HepG2 (cell line): ENCODE measurements at regions of chr16 and their contacts with region 1.

Region 1: GRCh38 chr16:12613131-12613991 is 190.3 kb downstream of the CPPED1 start:
- DNase-seq: peak; percentile 100
- ATAC-seq: peak; percentile 86
- H3K4me3 ChIP-seq: peak overlapping the region in 1 of 3 experiments; percentile 35; a peak in 1 of 6 replicates
- H3K27ac ChIP-seq: peak overlapping the region; percentile 97
- H3K4me1 ChIP-seq: peaks cover 88% of the 10 kb centered on the region
- H3K27me3 ChIP-seq: no peaks in the 10 kb centered on the region
- CTCF ChIP-seq: 0 out of 2 replicates have a peak, but pooled peaks have one; percentile 9
- EP300 ChIP-seq: peak; percentile 90 to 95
- POLR2A ChIP-seq: peak in 1 of 2 experiments; percentile 49; a peak in 2 of 4 replicates
- RAD21 ChIP-seq: peak; percentile 35

Region 2: GRCh38 chr16:12546918-12547607 is 66.3 kb before region 1 on chr16:
- CTCF ChIA-PET with region 1: no interaction called
- POLR2A ChIA-PET with region 1: no interaction called
- in situ Hi-C with region 1: loop called (anchors 10 kb)
- intact Hi-C with region 1: no loop called
- DNase-seq: no peak
- ATAC-seq: no peak
- H3K4me3 ChIP-seq: no peak overlapping the region
- H3K27ac ChIP-seq: no peak overlapping the region
- H3K4me1 ChIP-seq: peaks cover 50% of the 10 kb centered on the region
- H3K27me3 ChIP-seq: no peaks in the 10 kb centered on the region
- CTCF ChIP-seq: no peak
- EP300 ChIP-seq: no peak
- POLR2A ChIP-seq: no peak
- RAD21 ChIP-seq: no peak

Region 3: GRCh38 chr16:12584488-12585223 is 28.7 kb before region 1 on chr16:
- CTCF ChIA-PET with region 1: no interaction called
- POLR2A ChIA-PET with region 1: interaction called, 34 read pairs
- in situ Hi-C with region 1: no loop called
- intact Hi-C with region 1: no loop called
- DNase-seq: peak; percentile 91
- ATAC-seq: peak; percentile 52
- H3K4me3 ChIP-seq: no peak overlapping the region
- H3K27ac ChIP-seq: peak overlapping the region; percentile 27
- H3K4me1 ChIP-seq: peaks cover 48% of the 10 kb centered on the region
- H3K27me3 ChIP-seq: no peaks in the 10 kb centered on the region
- CTCF ChIP-seq: no peak
- EP300 ChIP-seq: peak; percentile 19 to 64; a peak in 2 of 4 replicates
- POLR2A ChIP-seq: no peak
- RAD21 ChIP-seq: no peak

Region 4: DNA sequence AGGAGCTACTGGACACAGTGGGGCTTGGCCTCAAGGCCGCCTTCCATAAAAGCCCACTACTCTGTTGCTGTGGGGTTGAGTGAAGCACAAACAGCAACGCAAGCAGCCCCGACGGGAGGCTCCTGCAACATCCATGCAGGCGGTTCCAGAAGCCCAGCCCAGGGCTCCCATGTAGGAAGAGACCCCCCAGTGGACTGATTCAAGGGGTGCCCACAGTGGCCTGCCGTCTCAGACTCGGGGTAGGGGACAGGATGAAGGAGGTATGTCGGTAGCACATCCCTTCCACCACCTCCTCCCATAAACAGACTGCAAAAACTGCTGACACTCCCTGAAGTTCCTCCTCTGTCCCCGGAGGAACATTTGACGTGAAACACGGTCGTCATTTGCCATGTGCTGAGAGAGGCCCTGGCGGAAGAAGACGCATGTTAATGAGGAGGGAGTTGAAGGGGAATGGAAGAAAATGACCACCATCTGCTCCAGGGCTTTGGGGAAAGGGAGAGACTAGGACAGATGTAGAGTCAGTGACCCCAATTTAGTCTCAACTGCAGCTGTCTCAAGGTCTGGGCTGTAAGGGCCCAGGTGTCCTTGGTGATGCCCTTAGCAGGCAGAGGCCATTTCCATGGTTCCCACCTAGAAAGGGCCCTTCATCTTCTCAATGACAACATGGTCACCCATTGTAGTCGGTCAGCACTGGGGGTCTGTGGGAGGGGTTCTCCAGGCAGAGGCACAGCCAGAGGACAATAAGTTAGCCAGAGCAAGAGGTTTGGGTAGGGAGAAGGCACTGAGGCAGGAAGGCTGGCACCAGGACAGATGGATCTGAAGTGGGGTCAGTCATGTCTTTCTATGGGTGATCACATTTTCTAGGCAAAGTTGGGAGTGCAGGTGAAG is 10.3 kb before region 1 on chr16:
- CTCF ChIA-PET with region 1: no interaction called
- POLR2A ChIA-PET with region 1: interaction called, 17 read pairs
- in situ Hi-C with region 1: no loop called
- intact Hi-C with region 1: no loop called
- DNase-seq: no peak
- ATAC-seq: no peak
- H3K4me3 ChIP-seq: no peak overlapping the region
- H3K27ac ChIP-seq: no peak overlapping the region
- H3K4me1 ChIP-seq: 0 out of 2 replicates have a peak, but pooled peaks cover 5% of the 10 kb centered on the region
- H3K27me3 ChIP-seq: no peaks in the 10 kb centered on the region; a peak in 1 of 5 replicates
- CTCF ChIP-seq: no peak
- EP300 ChIP-seq: no peak
- POLR2A ChIP-seq: no peak
- RAD21 ChIP-seq: no peak

Region 5: GRCh38 chr16:12639044-12639443 is 25.7 kb after region 1 on chr16:
- CTCF ChIA-PET with region 1: no interaction called
- POLR2A ChIA-PET with region 1: interaction called, 162 read pairs
- in situ Hi-C with region 1: no loop called
- intact Hi-C with region 1: loop called (anchors 1 kb)
- DNase-seq: peak; percentile 52
- ATAC-seq: no peak
- H3K4me3 ChIP-seq: no peak overlapping the region
- H3K27ac ChIP-seq: no peak overlapping the region
- H3K4me1 ChIP-seq: peaks cover 25% of the 10 kb centered on the region
- H3K27me3 ChIP-seq: no peaks in the 10 kb centered on the region
- CTCF ChIP-seq: no peak
- EP300 ChIP-seq: no peak
- POLR2A ChIP-seq: no peak
- RAD21 ChIP-seq: no peak

Region 6: DNA sequence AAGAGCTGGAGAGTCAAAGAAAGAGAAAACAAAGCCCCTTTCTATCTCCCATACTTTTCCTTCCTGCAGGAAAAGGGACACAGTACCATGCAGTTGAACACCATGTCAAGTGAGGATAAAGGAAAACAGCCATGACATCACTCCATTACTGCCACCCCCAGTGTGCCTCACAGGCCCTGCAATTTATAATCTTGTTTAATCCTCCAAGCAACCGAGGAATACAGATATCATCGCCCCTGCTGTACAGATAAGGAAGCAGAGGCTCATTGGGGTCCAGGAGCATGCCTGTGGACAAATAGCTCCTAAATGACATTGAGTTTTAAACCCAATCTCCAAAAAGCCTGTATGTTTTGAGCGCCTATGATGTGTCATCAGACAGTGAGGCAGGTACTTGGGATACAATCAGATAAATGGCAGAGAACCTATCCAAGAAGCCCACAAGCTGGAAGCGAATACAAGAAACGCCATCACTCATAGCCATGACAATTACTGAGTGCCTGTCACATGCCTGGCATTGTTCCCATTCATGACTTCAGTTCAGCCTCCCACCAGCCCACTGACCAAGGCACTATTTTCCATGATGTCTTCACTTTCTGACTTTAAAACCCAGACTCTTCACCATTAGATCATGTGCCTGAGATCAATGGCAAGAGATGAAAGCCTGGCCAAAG is 144.8 kb after region 1 on chr16:
- CTCF ChIA-PET with region 1: no interaction called
- POLR2A ChIA-PET with region 1: interaction called, 18 read pairs
- in situ Hi-C with region 1: no loop called
- intact Hi-C with region 1: no loop called
- DNase-seq: no peak
- ATAC-seq: no peak
- H3K4me3 ChIP-seq: no peak overlapping the region
- H3K27ac ChIP-seq: no peak overlapping the region
- H3K4me1 ChIP-seq: peaks cover 58% of the 10 kb centered on the region
- H3K27me3 ChIP-seq: no peaks in the 10 kb centered on the region
- CTCF ChIP-seq: no peak
- EP300 ChIP-seq: no peak
- POLR2A ChIP-seq: no peak
- RAD21 ChIP-seq: no peak